Prostate gland (tissue), 2 donors: ENCODE measurements at regions of chr3 and their contacts with region 1.

Region 1: GRCh38 chr3:186852994-186853393 is 10.5 kb downstream of the ADIPOQ start:
- DNase-seq: no peak
- H3K4me3 ChIP-seq: no peak overlapping the region
- H3K27ac ChIP-seq: no peak overlapping the region
- H3K4me1 ChIP-seq: no peaks in the 10 kb centered on the region
- H3K27me3 ChIP-seq: no peaks in the 10 kb centered on the region
- CTCF ChIP-seq: no peak
- POLR2A ChIP-seq: no peak

Region 2: DNA sequence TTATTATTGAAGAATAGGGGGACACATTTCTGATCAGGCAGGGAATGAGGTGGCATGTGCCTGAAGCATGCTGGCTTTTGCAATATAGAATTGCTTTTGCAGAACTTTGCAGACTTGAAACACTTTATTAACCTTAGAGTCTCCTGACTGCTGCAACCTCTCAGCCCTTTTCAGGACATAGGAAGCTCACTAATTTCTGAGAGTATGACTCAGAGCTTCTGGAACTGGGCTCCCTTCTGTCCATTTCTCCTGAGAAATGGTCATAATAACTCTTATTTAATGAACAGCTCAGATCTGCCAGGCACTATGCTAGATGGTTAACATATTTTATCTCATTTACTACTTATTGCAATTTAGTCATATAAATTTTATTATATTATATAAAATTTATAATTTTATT is 452.3 kb before region 1 on chr3:
- intact Hi-C with region 1: no loop called
- DNase-seq: no peak
- H3K4me3 ChIP-seq: no peak overlapping the region
- H3K27ac ChIP-seq: no peak overlapping the region
- H3K4me1 ChIP-seq: no peaks in the 10 kb centered on the region
- H3K27me3 ChIP-seq: no peaks in the 10 kb centered on the region
- CTCF ChIP-seq: no peak
- POLR2A ChIP-seq: no peak

Region 3: GRCh38 chr3:186772701-186773424 is 80.1 kb before region 1 on chr3:
- intact Hi-C with region 1: no loop called
- DNase-seq: peak; percentile 29
- H3K4me3 ChIP-seq: peak overlapping the region; percentile 18 to 26
- H3K27ac ChIP-seq: no peak overlapping the region
- H3K4me1 ChIP-seq: no peaks in the 10 kb centered on the region
- H3K27me3 ChIP-seq: no peaks in the 10 kb centered on the region
- CTCF ChIP-seq: no peak
- POLR2A ChIP-seq: no peak

Region 4: GRCh38 chr3:187164885-187165543 is 312.0 kb after region 1 on chr3:
- intact Hi-C with region 1: loop called (anchors 5 kb)
- DNase-seq: peak; percentile 54
- H3K4me3 ChIP-seq: no peak overlapping the region
- H3K27ac ChIP-seq: no peak overlapping the region
- H3K4me1 ChIP-seq: no peaks in the 10 kb centered on the region
- H3K27me3 ChIP-seq: no peaks in the 10 kb centered on the region
- CTCF ChIP-seq: peak in 3 of 4 experiments; percentile 68 to 77 (median 77)
- POLR2A ChIP-seq: no peak